ENCODE measurements at regions of chrX and their contacts with region 1.

Region 1: DNA sequence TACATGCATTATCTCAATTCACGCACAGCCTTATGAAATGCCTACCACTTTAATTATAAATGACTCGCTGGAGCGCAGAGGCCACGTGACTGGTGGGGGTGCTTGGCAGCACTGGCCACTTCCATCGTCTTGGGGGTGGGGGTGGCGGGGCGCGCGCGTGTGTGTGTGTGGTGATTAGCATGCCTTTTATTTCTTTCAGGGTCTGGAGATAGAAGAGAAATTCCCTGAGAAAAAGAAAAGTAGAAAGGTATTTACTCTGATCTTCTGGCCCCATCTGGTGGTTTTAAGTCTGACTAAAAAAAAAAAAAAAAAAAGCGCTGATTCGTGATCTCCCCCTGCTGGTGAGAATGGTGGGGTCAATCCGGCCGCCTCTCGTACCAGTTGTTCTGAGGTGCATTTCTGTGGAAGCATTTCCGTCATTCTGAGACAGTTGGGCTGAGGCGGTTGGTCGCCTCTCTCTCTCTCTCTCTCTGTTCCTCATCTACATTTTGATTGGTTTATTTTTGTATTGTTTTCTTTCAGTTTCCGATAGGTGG is at the start of gene CCNB3:
- DNase-seq: peak; percentile 70 to 71
- H3K4me3 ChIP-seq: no peak within 1 kb of the TSS
- H3K4me3 Mint-ChIP-seq: peak within 1 kb of the TSS; percentile 39
- H3K27ac Mint-ChIP-seq: peak within 1 kb of the TSS; percentile 45
- H3K4me1 ChIP-seq: peaks cover 18% of the 10 kb centered on the region
- H3K4me1 Mint-ChIP-seq: peaks cover 17% of the 10 kb centered on the region
- H3K27me3 ChIP-seq: no peaks in the 10 kb centered on the region
- H3K27me3 Mint-ChIP-seq: no peaks in the 10 kb centered on the region
- CTCF ChIP-seq: peak; percentile 60 to 77
- total RNA-seq, gene CCNB3: 0.82 and 2.1 TPM in 2 replicates

Region 2: DNA sequence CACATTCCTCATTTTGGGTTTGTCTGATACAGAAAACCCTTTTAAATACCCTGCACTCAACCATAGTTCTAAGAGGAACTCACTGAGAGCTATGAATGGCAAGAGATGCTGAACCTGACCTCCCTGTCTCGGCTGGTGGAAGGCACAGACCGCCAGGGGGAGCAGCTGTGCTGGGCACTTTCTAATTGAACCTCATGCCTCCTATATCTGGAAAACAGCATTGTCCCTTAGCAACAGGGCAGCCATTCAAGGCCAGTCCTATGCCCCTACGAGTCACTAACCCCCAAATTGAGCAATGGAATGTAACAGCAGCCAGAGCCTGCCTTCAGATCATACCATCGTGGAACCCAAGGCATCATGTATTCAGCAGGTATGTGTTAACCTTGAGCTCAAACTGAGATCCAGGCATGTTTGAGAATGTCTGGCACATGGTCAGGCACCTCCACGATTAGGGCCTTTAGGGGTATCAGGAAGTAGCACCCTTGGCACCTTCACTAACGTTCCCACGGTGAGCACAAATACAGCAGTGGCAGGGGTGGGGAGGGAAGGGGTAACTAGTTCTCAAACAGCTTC is 320.1 kb before region 1 on chrX:
- CTCF ChIA-PET with region 1: no interaction called
- POLR2A ChIA-PET with region 1: no interaction called
- intact Hi-C with region 1: loop called (anchors 1 kb)
- DNase-seq: peak; percentile 62 to 71
- H3K4me3 ChIP-seq: no peak overlapping the region
- H3K4me3 Mint-ChIP-seq: no peak overlapping the region
- H3K27ac Mint-ChIP-seq: peak overlapping the region; percentile 28
- H3K4me1 ChIP-seq: 0 out of 2 replicates have a peak, but pooled peaks cover 10% of the 10 kb centered on the region
- H3K4me1 Mint-ChIP-seq: peaks cover 15% of the 10 kb centered on the region
- H3K27me3 ChIP-seq: no peaks in the 10 kb centered on the region
- H3K27me3 Mint-ChIP-seq: no peaks in the 10 kb centered on the region
- CTCF ChIP-seq: peak; percentile 43 to 62

Region 3: GRCh38 chrX:49915361-49916222 is 288.8 kb before region 1 on chrX:
- CTCF ChIA-PET with region 1: no interaction called
- POLR2A ChIA-PET with region 1: no interaction called
- intact Hi-C with region 1: loop called (anchors 1 kb)
- DNase-seq: peak; percentile 45 to 56
- H3K4me3 ChIP-seq: no peak overlapping the region
- H3K4me3 Mint-ChIP-seq: no peak overlapping the region
- H3K27ac Mint-ChIP-seq: no peak overlapping the region
- H3K4me1 ChIP-seq: peaks cover 4% of the 10 kb centered on the region; the same call in 1 of the 2 replicates
- H3K4me1 Mint-ChIP-seq: peaks cover 10% of the 10 kb centered on the region
- H3K27me3 ChIP-seq: no peaks in the 10 kb centered on the region
- H3K27me3 Mint-ChIP-seq: no peaks in the 10 kb centered on the region
- CTCF ChIP-seq: peak; percentile 62 to 80

Region 4: DNA sequence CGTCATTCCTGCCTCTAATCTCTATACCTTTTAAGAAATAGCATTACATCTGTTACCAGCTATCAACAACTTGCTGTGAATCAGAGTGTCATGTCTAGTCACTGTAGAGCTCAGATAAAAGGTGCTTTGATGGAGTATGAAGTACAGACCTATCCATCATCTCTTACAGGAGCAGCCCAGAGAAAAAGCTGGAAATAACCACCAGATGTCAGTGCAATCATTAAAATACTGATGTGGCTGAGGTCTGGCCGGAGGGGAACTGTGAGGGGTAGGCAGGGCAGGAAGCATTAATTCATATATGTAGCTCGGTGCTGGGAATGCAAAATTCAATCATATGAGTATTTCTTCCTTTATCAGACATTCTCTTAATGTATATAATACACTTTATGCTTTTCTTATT is 104.2 kb before region 1 on chrX:
- CTCF ChIA-PET with region 1: interaction called, 10 read pairs
- POLR2A ChIA-PET with region 1: interaction called, 8 read pairs
- intact Hi-C with region 1: loop called (anchors 1 kb)
- DNase-seq: peak; percentile 44 to 52
- H3K4me3 ChIP-seq: no peak overlapping the region
- H3K4me3 Mint-ChIP-seq: no peak overlapping the region
- H3K27ac Mint-ChIP-seq: peak overlapping the region; percentile 75
- H3K4me1 ChIP-seq: peaks cover 8% of the 10 kb centered on the region; the same call in 1 of the 2 replicates
- H3K4me1 Mint-ChIP-seq: peaks cover 14% of the 10 kb centered on the region
- H3K27me3 ChIP-seq: no peaks in the 10 kb centered on the region
- H3K27me3 Mint-ChIP-seq: no peaks in the 10 kb centered on the region
- CTCF ChIP-seq: peak; percentile 38 to 47

Region 5: DNA sequence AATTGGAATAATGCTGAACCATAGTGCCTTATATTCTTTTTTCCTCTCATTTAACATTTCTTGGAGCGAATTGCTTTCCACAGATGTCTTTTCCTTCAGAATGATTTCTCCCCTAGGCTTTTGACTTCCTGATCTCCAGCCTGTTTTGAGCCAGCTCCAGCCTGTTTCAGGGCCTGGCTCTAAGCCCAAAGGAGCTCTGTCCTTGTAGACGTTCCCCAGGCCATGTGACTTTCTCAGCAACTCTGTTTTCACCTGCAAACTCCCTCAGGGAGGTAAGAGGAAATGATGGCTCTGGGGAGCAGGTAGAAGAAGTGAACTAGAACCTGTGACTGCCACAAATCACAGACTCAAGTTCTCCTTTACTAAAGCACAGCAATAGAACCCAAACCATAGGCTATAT is 92.7 kb before region 1 on chrX:
- CTCF ChIA-PET with region 1: interaction called, 5 read pairs
- POLR2A ChIA-PET with region 1: no interaction called
- intact Hi-C with region 1: loop called (anchors 2 kb)
- DNase-seq: no peak
- H3K4me3 ChIP-seq: no peak overlapping the region
- H3K4me3 Mint-ChIP-seq: no peak overlapping the region
- H3K27ac Mint-ChIP-seq: peak overlapping the region; percentile 69
- H3K4me1 ChIP-seq: peaks cover 84% of the 10 kb centered on the region
- H3K4me1 Mint-ChIP-seq: peaks cover 17% of the 10 kb centered on the region
- H3K27me3 ChIP-seq: no peaks in the 10 kb centered on the region
- H3K27me3 Mint-ChIP-seq: no peaks in the 10 kb centered on the region
- CTCF ChIP-seq: no peak

Region 6: GRCh38 chrX:50147972-50148371 is 56.5 kb before region 1 on chrX:
- CTCF ChIA-PET with region 1: no interaction called
- POLR2A ChIA-PET with region 1: no interaction called
- intact Hi-C with region 1: no loop called
- DNase-seq: no peak
- H3K4me3 ChIP-seq: no peak overlapping the region
- H3K4me3 Mint-ChIP-seq: no peak overlapping the region
- H3K27ac Mint-ChIP-seq: no peak overlapping the region
- H3K4me1 ChIP-seq: no peaks in the 10 kb centered on the region
- H3K4me1 Mint-ChIP-seq: no peaks in the 10 kb centered on the region
- H3K27me3 ChIP-seq: no peaks in the 10 kb centered on the region
- H3K27me3 Mint-ChIP-seq: no peaks in the 10 kb centered on the region
- CTCF ChIP-seq: no peak

Region 7: DNA sequence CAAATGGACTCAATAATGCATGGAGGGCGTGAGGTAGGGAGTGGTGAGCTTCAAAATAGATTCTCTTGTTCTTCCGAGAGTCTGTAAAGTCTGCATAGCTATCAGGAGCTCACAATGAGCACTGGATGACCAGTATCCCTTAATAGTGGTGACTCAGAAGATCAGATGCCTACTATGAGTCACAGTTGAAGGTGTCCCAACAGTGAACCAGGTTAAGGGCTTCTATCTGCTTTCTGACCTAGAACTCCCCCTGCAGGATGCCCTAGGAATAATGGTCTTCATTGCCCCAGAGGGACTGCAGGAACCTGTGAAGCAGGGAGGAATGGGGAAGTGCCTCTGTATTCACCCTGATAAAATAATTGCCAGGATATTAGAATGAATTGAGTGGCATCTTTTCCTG is 244.1 kb after region 1 on chrX:
- CTCF ChIA-PET with region 1: no interaction called
- POLR2A ChIA-PET with region 1: no interaction called
- intact Hi-C with region 1: loop called (anchors 5 kb)
- DNase-seq: peak; percentile 37 to 50
- H3K4me3 ChIP-seq: no peak overlapping the region
- H3K4me3 Mint-ChIP-seq: no peak overlapping the region
- H3K27ac Mint-ChIP-seq: no peak overlapping the region
- H3K4me1 ChIP-seq: no peaks in the 10 kb centered on the region
- H3K4me1 Mint-ChIP-seq: no peaks in the 10 kb centered on the region
- H3K27me3 ChIP-seq: no peaks in the 10 kb centered on the region
- H3K27me3 Mint-ChIP-seq: no peaks in the 10 kb centered on the region
- CTCF ChIP-seq: peak; percentile 21 to 28

Region 8: GRCh38 chrX:50622751-50623150 is 418.3 kb after region 1 on chrX:
- CTCF ChIA-PET with region 1: no interaction called
- POLR2A ChIA-PET with region 1: no interaction called
- intact Hi-C with region 1: no loop called
- DNase-seq: no peak
- H3K4me3 ChIP-seq: no peak overlapping the region
- H3K4me3 Mint-ChIP-seq: no peak overlapping the region
- H3K27ac Mint-ChIP-seq: no peak overlapping the region
- H3K4me1 ChIP-seq: no peaks in the 10 kb centered on the region
- H3K4me1 Mint-ChIP-seq: peaks cover 5% of the 10 kb centered on the region
- H3K27me3 ChIP-seq: no peaks in the 10 kb centered on the region
- H3K27me3 Mint-ChIP-seq: no peaks in the 10 kb centered on the region
- CTCF ChIP-seq: no peak

Measured in Caco-2 (cell line).